CD8-positive, alpha-beta memory T cell (primary cell): ENCODE measurements at regions of chr6 and their contacts with region 1.

Region 1: GRCh38 chr6:111838749-111839484 is 34.3 kb downstream of the FYN start:
- DNase-seq: no peak
- H3K4me3 ChIP-seq: peak overlapping the region; percentile 18
- H3K4me3 Mint-ChIP-seq: peak overlapping the region; percentile 50 to 84 (median 65)
- H3K27ac ChIP-seq: no peak overlapping the region
- H3K27ac Mint-ChIP-seq: peak overlapping the region in 7 of 8 donors; percentile 91 to 98 (median 95)
- H3K4me1 ChIP-seq: peaks cover 99% of the 10 kb centered on the region
- H3K4me1 Mint-ChIP-seq: peaks cover 0 to 26% (median 0%) of the 10 kb centered on the region in 3 donors
- H3K27me3 ChIP-seq: no peaks in the 10 kb centered on the region
- H3K27me3 Mint-ChIP-seq: no peaks in the 10 kb centered on the region

Region 2: GRCh38 chr6:111823831-111824607 is 14.9 kb before region 1 on chr6:
- CTCF ChIA-PET with region 1: interaction called, 15 read pairs
- POLR2A ChIA-PET with region 1: interaction called, 11 read pairs
- DNase-seq: peak in 1 of 5 donors; percentile 57
- H3K4me3 ChIP-seq: peak overlapping the region; percentile 6
- H3K4me3 Mint-ChIP-seq: peak overlapping the region; percentile 29 to 64 (median 38)
- H3K27ac ChIP-seq: peak overlapping the region; percentile 4
- H3K27ac Mint-ChIP-seq: peak overlapping the region; percentile 72 to 97 (median 89)
- H3K4me1 ChIP-seq: peaks cover 61% of the 10 kb centered on the region
- H3K4me1 Mint-ChIP-seq: peaks cover 72 to 79% (median 78%) of the 10 kb centered on the region in 3 donors
- H3K27me3 ChIP-seq: no peaks in the 10 kb centered on the region
- H3K27me3 Mint-ChIP-seq: peaks cover 0 to 1% of the 10 kb centered on the region in 2 donors

Region 3: DNA sequence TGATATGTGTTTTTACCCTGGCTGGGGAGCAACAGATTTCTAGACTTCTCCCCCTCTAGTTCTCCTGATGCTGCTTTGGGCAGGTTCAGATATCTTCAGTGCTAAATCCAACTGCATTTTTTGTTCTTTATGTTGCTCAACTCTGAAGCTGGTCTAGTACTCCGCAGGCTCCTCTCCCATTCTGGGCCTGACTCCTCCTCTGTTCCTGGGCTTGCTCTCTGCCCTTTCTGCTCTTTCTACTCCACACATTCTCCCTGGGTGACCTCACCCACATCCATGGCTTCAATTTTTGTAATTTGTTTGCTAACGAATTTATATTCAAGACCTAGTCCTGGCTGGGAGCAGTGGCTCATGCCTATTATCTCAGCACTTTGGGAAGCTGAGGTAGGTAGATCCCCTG is 27.9 kb after region 1 on chr6:
- CTCF ChIA-PET with region 1: interaction called, 13 read pairs
- POLR2A ChIA-PET with region 1: interaction called, 6 read pairs
- DNase-seq: no peak
- H3K4me3 ChIP-seq: no peak overlapping the region
- H3K4me3 Mint-ChIP-seq: peak overlapping the region; percentile 12 to 75 (median 65)
- H3K27ac ChIP-seq: no peak overlapping the region
- H3K27ac Mint-ChIP-seq: peak overlapping the region in 6 of 8 donors; percentile 13 to 81 (median 58)
- H3K4me1 ChIP-seq: peaks cover 96% of the 10 kb centered on the region
- H3K4me1 Mint-ChIP-seq: peaks cover 89 to 95% (median 94%) of the 10 kb centered on the region in 3 donors
- H3K27me3 ChIP-seq: no peaks in the 10 kb centered on the region
- H3K27me3 Mint-ChIP-seq: no peaks in the 10 kb centered on the region